ENCODE measurements at regions of chr2 and their contacts with region 1.

Region 1: GRCh38 chr2:55050133-55050994 is at the start of gene RTN4:
- DNase-seq: peak; percentile 99
- H3K4me3 ChIP-seq: peak within 1 kb of the TSS; percentile 75 to 81
- H3K27ac ChIP-seq: peak within 1 kb of the TSS; percentile 98
- H3K4me1 ChIP-seq: peaks cover 0 to 9% of the 10 kb centered on the region in 2 donors
- H3K27me3 ChIP-seq: no peaks in the 10 kb centered on the region
- CTCF ChIP-seq: peak in 1 of 4 experiments; percentile 36
- POLR2A ChIP-seq: peak; percentile 99 to 100
- total RNA-seq, gene RTN4: 119 to 205 (median 154) TPM

Region 2: GRCh38 chr2:55163274-55163721 is 112.9 kb after region 1 on chr2:
- intact Hi-C with region 1: loop called (anchors 5 kb)
- DNase-seq: peak; percentile 36 to 46
- H3K4me3 ChIP-seq: no peak overlapping the region
- H3K27ac ChIP-seq: peak overlapping the region; percentile 53 to 79
- H3K4me1 ChIP-seq: peaks cover 4 to 11% of the 10 kb centered on the region in 2 donors
- H3K27me3 ChIP-seq: no peaks in the 10 kb centered on the region
- CTCF ChIP-seq: no peak
- POLR2A ChIP-seq: no peak

Measured in uterus (tissue), 4 donors.